OCI-LY7 (cell line): ENCODE measurements at regions of chr11 and their contacts with region 1.

Region 1: GRCh38 chr11:26276798-26277424 is 55.0 kb upstream of the ANO3 start:
- DNase-seq: peak; percentile 71
- H3K4me3 ChIP-seq: no peak overlapping the region
- H3K27ac ChIP-seq: no peak overlapping the region
- H3K4me1 ChIP-seq: no peaks in the 10 kb centered on the region
- CTCF ChIP-seq: peak; percentile 100

Region 2: GRCh38 chr11:26134481-26135355 is 142.2 kb before region 1 on chr11:
- CTCF ChIA-PET with region 1: no interaction called
- POLR2A ChIA-PET with region 1: interaction called, 3 read pairs
- intact Hi-C with region 1: loop called (anchors 2 kb)
- DNase-seq: peak; percentile 72
- H3K4me3 ChIP-seq: no peak overlapping the region
- H3K27ac ChIP-seq: peak overlapping the region; percentile 10
- H3K4me1 ChIP-seq: peaks cover 19% of the 10 kb centered on the region
- CTCF ChIP-seq: peak; percentile 87

Region 3: GRCh38 chr11:26227296-26227695 is 49.6 kb before region 1 on chr11:
- CTCF ChIA-PET with region 1: no interaction called
- POLR2A ChIA-PET with region 1: interaction called, 3 read pairs
- intact Hi-C with region 1: loop called (anchors 2 kb)
- DNase-seq: peak; percentile 82
- H3K4me3 ChIP-seq: no peak overlapping the region
- H3K27ac ChIP-seq: peak overlapping the region; percentile 38
- H3K4me1 ChIP-seq: peaks cover 24% of the 10 kb centered on the region
- CTCF ChIP-seq: peak; percentile 93

Region 4: DNA sequence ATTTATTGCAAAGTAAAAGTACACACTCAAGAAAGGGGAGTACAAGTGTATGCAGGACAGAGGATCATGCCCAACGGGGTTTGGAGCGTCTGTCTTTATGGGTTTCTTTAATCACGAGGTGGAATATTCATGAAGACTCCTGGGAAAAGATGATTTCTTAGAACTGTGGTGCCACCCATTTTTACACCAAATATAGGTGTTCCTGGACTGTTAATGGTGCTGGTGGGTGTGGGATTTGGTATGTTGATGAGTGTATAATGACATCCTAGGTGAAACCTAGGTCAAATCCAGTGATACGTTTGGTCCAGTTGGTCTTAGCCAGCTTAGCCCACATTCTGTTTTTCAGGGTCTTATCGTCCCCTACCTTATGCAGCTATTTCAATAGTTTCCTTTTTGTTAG is 76.1 kb after region 1 on chr11:
- CTCF ChIA-PET with region 1: no interaction called
- POLR2A ChIA-PET with region 1: no interaction called
- intact Hi-C with region 1: no loop called
- DNase-seq: no peak
- H3K4me3 ChIP-seq: no peak overlapping the region
- H3K27ac ChIP-seq: no peak overlapping the region
- H3K4me1 ChIP-seq: no peaks in the 10 kb centered on the region
- CTCF ChIP-seq: no peak